ENCODE measurements at regions of chr4 and their contacts with region 1.

Region 1: DNA sequence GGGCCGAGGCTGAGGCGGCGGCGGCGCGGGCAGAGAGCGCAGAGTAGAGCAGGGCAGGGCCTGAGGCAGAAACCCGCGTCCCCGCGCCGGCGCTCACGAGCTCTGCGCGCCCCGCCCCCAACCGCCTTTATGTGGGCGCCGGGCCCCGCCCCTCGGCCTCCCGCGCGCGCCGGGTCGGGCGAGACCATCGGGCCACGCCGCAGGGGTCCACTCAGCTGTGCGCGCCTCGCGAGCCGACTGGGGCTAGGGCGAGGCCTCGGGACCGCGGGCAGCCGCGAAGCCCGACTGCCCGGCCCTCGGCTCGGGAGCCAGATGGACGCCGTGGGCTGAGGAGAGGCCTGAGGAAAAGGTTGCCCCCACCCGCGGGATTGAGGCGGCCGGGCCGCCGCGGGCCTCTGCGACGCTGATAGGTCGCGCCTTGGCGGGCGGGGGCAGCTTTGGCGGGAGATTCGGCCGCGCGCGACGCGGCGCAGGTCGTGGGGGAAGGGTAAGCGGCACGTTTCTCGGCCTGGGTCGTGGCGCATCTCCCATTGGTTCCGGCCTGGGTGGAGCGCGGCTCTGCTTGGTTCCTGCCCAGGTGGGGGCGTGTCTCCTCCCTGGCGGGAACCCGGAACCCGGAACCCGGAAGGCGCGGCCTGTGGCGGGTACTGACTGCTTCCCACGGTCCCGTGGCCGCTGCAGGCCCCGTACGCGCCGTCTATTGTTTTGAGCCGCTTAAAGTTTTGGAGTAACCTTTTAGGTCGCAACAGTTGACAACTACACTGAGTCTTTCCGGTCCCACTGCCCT is at the start of gene SLBP:
- DNase-seq: peak; percentile 97 to 98
- H3K4me3 ChIP-seq: peak within 1 kb of the TSS; percentile 68
- H3K4me3 Mint-ChIP-seq: peak within 1 kb of the TSS; percentile 99
- H3K27ac Mint-ChIP-seq: peak within 1 kb of the TSS; percentile 99
- H3K4me1 ChIP-seq: peaks cover 29% of the 10 kb centered on the region
- H3K4me1 Mint-ChIP-seq: peaks cover 29% of the 10 kb centered on the region
- H3K27me3 ChIP-seq: no peaks in the 10 kb centered on the region
- H3K27me3 Mint-ChIP-seq: no peaks in the 10 kb centered on the region
- CTCF ChIP-seq: no peak
- total RNA-seq, gene SLBP: 113 and 116 TPM in 2 replicates

Region 2: GRCh38 chr4:948051-948935 is 764.1 kb before region 1 on chr4:
- CTCF ChIA-PET with region 1: no interaction called
- POLR2A ChIA-PET with region 1: no interaction called
- intact Hi-C with region 1: no loop called
- DNase-seq: no peak
- H3K4me3 ChIP-seq: no peak overlapping the region
- H3K4me3 Mint-ChIP-seq: no peak overlapping the region
- H3K27ac Mint-ChIP-seq: no peak overlapping the region
- H3K4me1 ChIP-seq: no peaks in the 10 kb centered on the region
- H3K4me1 Mint-ChIP-seq: peaks cover 7% of the 10 kb centered on the region
- H3K27me3 ChIP-seq: no peaks in the 10 kb centered on the region
- H3K27me3 Mint-ChIP-seq: no peaks in the 10 kb centered on the region
- CTCF ChIP-seq: no peak

Region 3: GRCh38 chr4:1693129-1693896 is 19.1 kb before region 1 on chr4:
- CTCF ChIA-PET with region 1: interaction called, 27 read pairs
- POLR2A ChIA-PET with region 1: interaction called, 16 read pairs
- intact Hi-C with region 1: loop called (anchors 1 kb)
- DNase-seq: peak; percentile 79 to 88
- H3K4me3 ChIP-seq: no peak overlapping the region
- H3K4me3 Mint-ChIP-seq: no peak overlapping the region
- H3K27ac Mint-ChIP-seq: no peak overlapping the region
- H3K4me1 ChIP-seq: no peaks in the 10 kb centered on the region
- H3K4me1 Mint-ChIP-seq: no peaks in the 10 kb centered on the region
- H3K27me3 ChIP-seq: no peaks in the 10 kb centered on the region
- H3K27me3 Mint-ChIP-seq: no peaks in the 10 kb centered on the region
- CTCF ChIP-seq: peak; percentile 82 to 87

Region 4: DNA sequence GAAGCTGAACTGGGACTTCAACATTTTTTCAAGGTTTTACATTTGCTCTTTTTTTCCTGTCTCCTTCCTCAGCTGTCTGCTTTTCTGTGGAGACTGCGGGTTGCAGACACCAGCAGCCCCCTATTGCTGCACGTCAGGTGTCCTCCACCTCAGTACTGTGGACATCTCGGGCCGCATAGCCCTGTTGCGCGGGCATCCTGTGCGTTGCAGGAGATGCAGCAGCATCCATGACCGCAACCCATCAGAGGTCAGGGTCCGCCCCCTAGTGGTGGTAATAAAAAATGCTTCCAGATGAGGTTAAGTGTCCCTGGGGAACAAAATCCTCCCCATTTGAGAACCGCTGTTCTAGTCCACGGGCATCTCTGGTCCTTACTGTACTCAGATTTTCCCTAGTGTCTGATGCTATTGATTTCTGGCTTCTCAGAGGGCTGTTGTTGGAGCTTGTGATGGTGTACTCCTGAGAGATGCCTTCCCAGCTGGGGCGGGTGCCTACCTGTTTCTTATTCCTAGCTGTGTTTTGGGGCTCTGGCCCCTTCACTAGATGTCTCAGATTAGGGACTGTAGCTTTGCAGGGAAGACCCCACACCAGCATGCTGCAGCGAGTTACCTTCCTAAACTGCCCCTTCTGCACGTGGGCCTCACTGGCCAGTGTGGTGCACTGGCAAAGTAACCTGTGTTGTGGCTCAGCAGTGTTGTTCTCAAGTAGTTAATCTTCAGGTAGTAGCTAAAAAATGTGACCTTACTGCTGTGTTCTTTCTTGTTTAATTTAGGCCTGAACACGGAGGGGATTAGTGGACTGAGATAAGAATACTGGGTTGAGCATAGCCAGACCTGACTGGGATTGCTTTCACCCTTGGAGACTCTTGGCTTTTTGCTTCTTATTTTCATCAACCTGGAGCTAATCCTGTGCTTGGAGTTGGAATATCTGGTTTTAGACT is 187.0 kb after region 1 on chr4:
- CTCF ChIA-PET with region 1: no interaction called
- POLR2A ChIA-PET with region 1: interaction called, 10 read pairs
- intact Hi-C with region 1: no loop called
- DNase-seq: peak; percentile 74 to 82
- H3K4me3 ChIP-seq: no peak overlapping the region
- H3K4me3 Mint-ChIP-seq: no peak overlapping the region
- H3K27ac Mint-ChIP-seq: no peak overlapping the region
- H3K4me1 ChIP-seq: peaks cover 16% of the 10 kb centered on the region
- H3K4me1 Mint-ChIP-seq: peaks cover 8% of the 10 kb centered on the region
- H3K27me3 ChIP-seq: no peaks in the 10 kb centered on the region
- H3K27me3 Mint-ChIP-seq: no peaks in the 10 kb centered on the region
- CTCF ChIP-seq: peak; percentile 76 to 79

Region 5: GRCh38 chr4:2262143-2262943 is 549.9 kb after region 1 on chr4:
- CTCF ChIA-PET with region 1: no interaction called
- POLR2A ChIA-PET with region 1: no interaction called
- intact Hi-C with region 1: loop called (anchors 5 kb)
- DNase-seq: peak; percentile 98
- H3K4me3 ChIP-seq: peak overlapping the region; percentile 63
- H3K4me3 Mint-ChIP-seq: peak overlapping the region; percentile 72
- H3K27ac Mint-ChIP-seq: no peak overlapping the region
- H3K4me1 ChIP-seq: 0 out of 2 replicates have a peak, but pooled peaks cover 5% of the 10 kb centered on the region
- H3K4me1 Mint-ChIP-seq: no peaks in the 10 kb centered on the region
- H3K27me3 ChIP-seq: no peaks in the 10 kb centered on the region
- H3K27me3 Mint-ChIP-seq: no peaks in the 10 kb centered on the region
- CTCF ChIP-seq: no peak

Region 6: GRCh38 chr4:2330091-2331042 is 618.0 kb after region 1 on chr4:
- CTCF ChIA-PET with region 1: no interaction called
- POLR2A ChIA-PET with region 1: no interaction called
- intact Hi-C with region 1: no loop called
- DNase-seq: no peak
- H3K4me3 ChIP-seq: no peak overlapping the region
- H3K4me3 Mint-ChIP-seq: no peak overlapping the region
- H3K27ac Mint-ChIP-seq: no peak overlapping the region
- H3K4me1 ChIP-seq: no peaks in the 10 kb centered on the region
- H3K4me1 Mint-ChIP-seq: peaks cover 12% of the 10 kb centered on the region
- H3K27me3 ChIP-seq: no peaks in the 10 kb centered on the region
- H3K27me3 Mint-ChIP-seq: no peaks in the 10 kb centered on the region
- CTCF ChIP-seq: no peak